Naive thymus-derived CD4-positive, alpha-beta T cell (primary cell): ENCODE measurements at regions of chr18 and their contacts with region 1.

Region 1: DNA sequence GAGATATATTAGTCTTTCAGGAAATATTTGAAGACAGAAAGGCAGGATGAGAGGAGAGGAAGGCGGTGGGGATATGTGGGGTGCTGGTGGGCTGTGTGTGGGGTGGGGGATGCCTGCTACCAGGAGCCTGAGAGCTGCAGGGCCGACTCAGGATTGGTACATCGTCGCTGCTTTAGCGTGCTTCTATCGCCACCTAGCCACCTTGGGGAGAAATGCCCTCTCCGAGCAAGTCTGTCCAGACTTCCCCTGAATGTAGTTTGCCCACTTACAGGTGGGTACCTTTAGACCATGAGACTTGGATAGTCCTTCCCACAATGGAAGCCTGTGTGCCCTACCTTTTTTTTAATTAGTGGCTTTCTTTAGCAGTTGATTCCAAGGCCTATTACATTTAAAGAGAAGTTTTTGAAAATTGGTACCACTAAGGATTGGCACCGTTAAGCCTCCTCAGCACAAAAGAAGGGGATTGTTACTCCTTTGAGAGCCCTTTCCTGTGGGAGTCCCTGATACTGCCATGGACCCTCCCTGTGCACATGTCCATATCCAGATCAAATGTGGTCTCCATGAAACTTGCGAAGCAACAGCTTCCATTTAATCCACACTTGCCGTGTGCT is 114.1 kb upstream of the NDUFV2 start:
- DNase-seq: peak; percentile 13 to 62 (median 52)
- ATAC-seq: peak; percentile 72
- H3K4me3 ChIP-seq: no peak overlapping the region
- H3K4me3 Mint-ChIP-seq: no peak overlapping the region
- H3K27ac ChIP-seq: no peak overlapping the region
- H3K27ac Mint-ChIP-seq: no peak overlapping the region
- H3K4me1 ChIP-seq: no peaks in the 10 kb centered on the region
- H3K4me1 Mint-ChIP-seq: peaks cover 0 to 3% (median 0%) of the 10 kb centered on the region in 7 donors
- H3K27me3 ChIP-seq: no peaks in the 10 kb centered on the region
- H3K27me3 Mint-ChIP-seq: peaks cover 15 to 37% (median 18%) of the 10 kb centered on the region in 5 donors

Region 2: GRCh38 chr18:7436166-7436565 is 1552.2 kb before region 1 on chr18:
- CTCF ChIA-PET with region 1: no interaction called
- POLR2A ChIA-PET with region 1: no interaction called
- intact Hi-C with region 1: no loop called
- DNase-seq: no peak
- ATAC-seq: no peak
- H3K4me3 ChIP-seq: no peak overlapping the region
- H3K4me3 Mint-ChIP-seq: no peak overlapping the region
- H3K27ac ChIP-seq: no peak overlapping the region
- H3K27ac Mint-ChIP-seq: no peak overlapping the region
- H3K4me1 ChIP-seq: no peaks in the 10 kb centered on the region
- H3K4me1 Mint-ChIP-seq: peaks cover 0 to 1% (median 0%) of the 10 kb centered on the region in 7 donors
- H3K27me3 ChIP-seq: no peaks in the 10 kb centered on the region
- H3K27me3 Mint-ChIP-seq: peaks cover 0 to 15% (median 0%) of the 10 kb centered on the region in 5 donors

Region 3: GRCh38 chr18:8478166-8478967 is 510.0 kb before region 1 on chr18:
- CTCF ChIA-PET with region 1: no interaction called
- POLR2A ChIA-PET with region 1: no interaction called
- intact Hi-C with region 1: loop called (anchors 2 kb)
- DNase-seq: peak in 7 of 9 donors; percentile 15 to 65 (median 31)
- ATAC-seq: peak; percentile 71
- H3K4me3 ChIP-seq: no peak overlapping the region
- H3K4me3 Mint-ChIP-seq: peak overlapping the region in 1 of 10 donors; percentile 36
- H3K27ac ChIP-seq: no peak overlapping the region
- H3K27ac Mint-ChIP-seq: no peak overlapping the region
- H3K4me1 ChIP-seq: no peaks in the 10 kb centered on the region
- H3K4me1 Mint-ChIP-seq: peaks cover 0 to 6% (median 0%) of the 10 kb centered on the region in 7 donors
- H3K27me3 ChIP-seq: no peaks in the 10 kb centered on the region
- H3K27me3 Mint-ChIP-seq: peaks cover 2 to 40% (median 24%) of the 10 kb centered on the region in 5 donors

Region 4: GRCh38 chr18:8654503-8655451 is 333.6 kb before region 1 on chr18:
- CTCF ChIA-PET with region 1: interaction called, 24 read pairs
- POLR2A ChIA-PET with region 1: no interaction called
- intact Hi-C with region 1: loop called (anchors 1 kb)
- DNase-seq: peak in 4 of 9 donors; percentile 19 to 42 (median 34)
- ATAC-seq: no peak
- H3K4me3 ChIP-seq: no peak overlapping the region
- H3K4me3 Mint-ChIP-seq: no peak overlapping the region
- H3K27ac ChIP-seq: no peak overlapping the region
- H3K27ac Mint-ChIP-seq: no peak overlapping the region
- H3K4me1 ChIP-seq: no peaks in the 10 kb centered on the region
- H3K4me1 Mint-ChIP-seq: peaks cover 0 to 1% (median 0%) of the 10 kb centered on the region in 7 donors
- H3K27me3 ChIP-seq: no peaks in the 10 kb centered on the region
- H3K27me3 Mint-ChIP-seq: peaks cover 13 to 36% (median 27%) of the 10 kb centered on the region in 5 donors

Region 5: GRCh38 chr18:8696749-8697211 is 291.6 kb before region 1 on chr18:
- CTCF ChIA-PET with region 1: interaction called, 43 read pairs
- POLR2A ChIA-PET with region 1: no interaction called
- intact Hi-C with region 1: loop called (anchors 1 kb)
- DNase-seq: peak; percentile 48 to 81 (median 67)
- ATAC-seq: peak; percentile 97
- H3K4me3 ChIP-seq: no peak overlapping the region
- H3K4me3 Mint-ChIP-seq: no peak overlapping the region
- H3K27ac ChIP-seq: no peak overlapping the region
- H3K27ac Mint-ChIP-seq: no peak overlapping the region
- H3K4me1 ChIP-seq: no peaks in the 10 kb centered on the region
- H3K4me1 Mint-ChIP-seq: no peaks in the 10 kb centered on the region
- H3K27me3 ChIP-seq: no peaks in the 10 kb centered on the region
- H3K27me3 Mint-ChIP-seq: peaks cover 16 to 30% (median 26%) of the 10 kb centered on the region in 5 donors

Region 6: DNA sequence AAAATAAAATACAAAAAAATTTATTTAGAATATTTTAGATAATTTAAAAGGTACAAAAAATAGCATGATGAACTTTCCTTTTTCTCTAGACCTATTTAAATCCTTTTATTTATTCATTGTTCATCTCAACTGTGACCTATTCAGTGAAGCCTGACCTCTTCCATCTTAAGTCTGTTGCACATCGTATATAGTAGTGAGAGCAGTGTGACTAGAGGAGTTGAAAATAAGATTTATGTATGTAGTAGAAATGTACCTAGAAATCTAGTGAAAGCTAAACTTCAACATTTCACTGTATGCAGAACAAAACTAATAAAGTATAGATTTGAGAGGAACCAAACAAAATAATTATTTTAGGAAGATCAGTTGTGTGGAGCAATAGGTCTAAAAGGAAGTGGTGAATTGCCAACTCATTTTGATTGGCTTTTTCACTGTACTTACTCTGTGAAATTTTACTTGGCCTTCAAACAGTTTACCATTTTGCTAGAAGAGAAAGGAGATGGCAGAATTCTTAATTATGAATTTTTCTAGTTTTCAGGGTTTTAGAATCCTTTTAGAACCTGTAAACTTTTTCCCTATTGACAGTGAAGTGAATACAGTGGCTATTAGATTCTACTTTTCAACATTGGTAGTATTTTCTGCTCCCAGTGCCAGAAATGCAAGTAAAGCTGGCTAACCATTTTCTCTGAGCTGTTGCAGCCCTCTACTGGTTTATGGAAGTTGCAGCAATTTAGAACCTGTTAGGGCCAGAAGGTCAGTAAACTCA is 159.3 kb after region 1 on chr18:
- CTCF ChIA-PET with region 1: no interaction called
- POLR2A ChIA-PET with region 1: no interaction called
- intact Hi-C with region 1: loop called (anchors 1 to 10 kb)
- DNase-seq: peak in 7 of 9 donors; percentile 35 to 66 (median 49)
- ATAC-seq: peak; percentile 81
- H3K4me3 ChIP-seq: no peak overlapping the region
- H3K4me3 Mint-ChIP-seq: peak overlapping the region in 9 of 10 donors; percentile 3 to 79 (median 42)
- H3K27ac ChIP-seq: peak overlapping the region; percentile 30
- H3K27ac Mint-ChIP-seq: peak overlapping the region; percentile 21 to 90 (median 66)
- H3K4me1 ChIP-seq: peaks cover 18 to 59% of the 10 kb centered on the region in 2 donors
- H3K4me1 Mint-ChIP-seq: peaks cover 54 to 93% (median 84%) of the 10 kb centered on the region in 7 donors
- H3K27me3 ChIP-seq: no peaks in the 10 kb centered on the region
- H3K27me3 Mint-ChIP-seq: no peaks in the 10 kb centered on the region

Region 7: GRCh38 chr18:9296233-9297006 is 308.1 kb after region 1 on chr18:
- CTCF ChIA-PET with region 1: no interaction called
- POLR2A ChIA-PET with region 1: no interaction called
- intact Hi-C with region 1: no loop called
- DNase-seq: no peak
- ATAC-seq: no peak
- H3K4me3 ChIP-seq: no peak overlapping the region
- H3K4me3 Mint-ChIP-seq: no peak overlapping the region
- H3K27ac ChIP-seq: no peak overlapping the region
- H3K27ac Mint-ChIP-seq: no peak overlapping the region
- H3K4me1 ChIP-seq: no peaks in the 10 kb centered on the region
- H3K4me1 Mint-ChIP-seq: no peaks in the 10 kb centered on the region
- H3K27me3 ChIP-seq: no peaks in the 10 kb centered on the region
- H3K27me3 Mint-ChIP-seq: no peaks in the 10 kb centered on the region